GM10248 (cell line): ENCODE measurements at regions of chr4 and their contacts with region 1.

Region 1: DNA sequence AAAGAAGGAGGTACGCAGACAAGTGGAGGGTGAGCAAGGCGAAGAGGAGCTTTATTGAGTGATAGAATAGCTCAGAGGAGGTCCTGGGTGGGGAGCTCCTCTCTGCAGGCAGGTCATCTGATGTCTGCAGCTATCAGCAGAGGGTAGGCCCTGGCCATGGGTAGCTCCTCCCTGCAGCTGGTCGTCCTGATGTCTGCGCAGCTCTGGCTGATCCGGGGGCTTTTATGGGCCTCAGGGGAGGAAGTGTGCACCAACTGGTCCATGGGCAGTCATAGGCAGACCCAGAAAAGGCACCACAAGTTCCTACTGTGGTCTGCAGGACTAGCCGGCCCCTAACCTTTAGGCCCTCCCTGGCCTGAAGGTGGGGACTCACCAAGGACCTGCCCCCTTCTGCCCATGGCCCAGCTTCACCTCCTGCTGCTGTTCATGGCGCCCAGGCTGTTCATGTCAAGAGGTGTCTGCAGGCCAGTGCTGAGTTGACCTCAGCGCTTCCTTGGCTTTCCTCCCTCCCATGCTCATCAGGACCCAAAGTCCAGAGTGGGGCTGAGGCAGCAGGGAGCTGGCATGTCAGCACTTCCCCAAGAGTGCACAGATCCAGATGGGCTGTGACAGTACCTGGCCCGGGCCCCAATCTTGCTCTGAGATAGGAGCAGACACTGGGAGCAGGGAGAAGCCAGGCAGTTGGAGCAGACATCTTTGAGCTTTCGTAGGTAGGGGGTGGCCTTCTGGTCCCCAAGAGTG is 46.1 kb downstream of the ARAP2 start:
- DNase-seq: no peak
- CTCF ChIP-seq: no peak

Region 2: GRCh38 chr4:36140421-36140820 is 57.8 kb before region 1 on chr4:
- CTCF ChIA-PET with region 1: no interaction called
- POLR2A ChIA-PET with region 1: no interaction called
- DNase-seq: no peak
- CTCF ChIP-seq: no peak

Region 3: DNA sequence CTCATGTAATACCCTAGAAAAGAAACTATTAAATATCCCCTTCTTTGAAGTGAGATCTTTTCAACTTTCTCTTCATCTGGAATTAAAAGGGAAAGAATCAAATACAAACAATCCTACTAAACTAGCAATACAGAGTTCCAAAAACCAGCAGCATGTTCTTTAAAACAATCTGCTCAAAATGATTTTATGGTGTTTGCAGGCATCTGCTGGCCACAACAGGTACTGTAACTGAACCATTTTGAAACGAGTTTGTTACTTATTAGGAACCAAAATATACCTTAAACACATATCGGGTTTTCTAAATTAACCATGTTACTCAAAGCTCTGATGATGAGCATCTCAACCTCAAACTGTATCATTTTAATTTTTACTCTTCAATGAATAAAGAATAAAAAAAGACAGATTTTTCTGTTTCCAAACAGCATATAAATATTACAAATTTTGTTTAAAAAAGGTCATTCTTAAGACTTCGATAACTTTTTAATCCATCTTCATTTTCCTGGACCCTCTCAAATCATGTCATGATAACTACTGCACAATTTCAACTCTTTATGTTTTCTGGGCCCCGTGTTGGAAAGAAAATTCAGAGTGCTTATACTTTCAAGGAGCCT is 10.4 kb before region 1 on chr4:
- CTCF ChIA-PET with region 1: interaction called, 20 read pairs
- POLR2A ChIA-PET with region 1: no interaction called
- DNase-seq: no peak
- CTCF ChIP-seq: peak; percentile 55

Region 4: GRCh38 chr4:36209941-36210649 is 11.9 kb after region 1 on chr4:
- CTCF ChIA-PET with region 1: interaction called, 34 read pairs
- POLR2A ChIA-PET with region 1: no interaction called
- DNase-seq: no peak
- CTCF ChIP-seq: no peak